ENCODE measurements at regions of chr13 and their contacts with region 1.

Region 1: DNA sequence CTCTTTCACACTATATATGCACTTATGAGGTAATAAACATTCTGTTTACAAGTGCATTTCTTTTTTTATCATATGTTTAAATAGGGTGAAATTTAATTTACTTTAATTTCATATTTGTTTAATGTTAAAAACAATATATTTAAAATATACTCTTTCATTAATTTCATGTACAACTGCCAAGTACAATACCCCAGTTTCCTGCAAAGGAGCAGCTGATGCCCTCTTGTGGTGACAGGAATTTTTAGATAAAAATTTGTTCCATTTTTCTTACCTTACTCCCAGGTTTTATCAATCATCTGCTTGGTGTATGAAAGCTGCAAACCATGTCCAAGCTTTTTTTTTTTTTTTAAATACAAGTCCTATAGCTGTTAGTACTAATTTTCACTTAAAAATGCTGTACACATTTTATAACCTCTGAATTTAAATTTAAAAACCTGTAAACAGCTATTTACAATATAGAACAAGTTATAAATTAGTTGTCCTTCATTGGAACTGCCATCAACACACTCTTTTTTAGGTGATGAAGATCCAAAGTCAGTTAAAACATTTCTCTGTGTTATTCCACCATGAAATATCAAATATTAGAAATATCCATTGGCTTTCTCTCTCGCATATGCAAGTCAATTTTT is 4.9 kb downstream of the PCDH20 start:
- DNase-seq: no peak
- ATAC-seq: 0 out of 3 replicates have a peak, but pooled peaks have one; percentile 33
- H3K4me3 ChIP-seq: no peak overlapping the region
- H3K27ac ChIP-seq: no peak overlapping the region
- H3K4me1 ChIP-seq: no peaks in the 10 kb centered on the region
- H3K27me3 ChIP-seq: peaks cover 0 to 4% of the 10 kb centered on the region in 2 experiments; a peak in 1 of 4 replicates
- CTCF ChIP-seq: peak; percentile 35 to 54 (median 36); a peak in 5 of 6 replicates
- EP300 ChIP-seq: no peak
- POLR2A ChIP-seq: no peak
- RAD21 ChIP-seq: peak; percentile 60

Region 2: GRCh38 chr13:60448907-60449510 is 961.8 kb before region 1 on chr13:
- CTCF ChIA-PET with region 1: interaction called, 8 read pairs
- POLR2A ChIA-PET with region 1: no interaction called
- RAD21 ChIA-PET with region 1: no interaction called
- SMC1A ChIA-PET with region 1: interaction called, 3 read pairs
- in situ Hi-C with region 1: loop called (anchors 25 kb)
- intact Hi-C with region 1: no loop called
- DNase-seq: no peak
- ATAC-seq: peak; percentile 61
- H3K4me3 ChIP-seq: no peak overlapping the region
- H3K27ac ChIP-seq: no peak overlapping the region
- H3K4me1 ChIP-seq: no peaks in the 10 kb centered on the region
- H3K27me3 ChIP-seq: no peaks in the 10 kb centered on the region
- CTCF ChIP-seq: peak; percentile 67 to 73 (median 68)
- EP300 ChIP-seq: no peak
- POLR2A ChIP-seq: no peak
- RAD21 ChIP-seq: peak; percentile 82

Region 3: GRCh38 chr13:60479273-60479672 is 931.5 kb before region 1 on chr13:
- CTCF ChIA-PET with region 1: no interaction called
- POLR2A ChIA-PET with region 1: no interaction called
- RAD21 ChIA-PET with region 1: no interaction called
- SMC1A ChIA-PET with region 1: no interaction called
- in situ Hi-C with region 1: loop called (anchors 25 kb)
- intact Hi-C with region 1: loop called (anchors 10 kb)
- DNase-seq: no peak
- ATAC-seq: no peak
- H3K4me3 ChIP-seq: no peak overlapping the region
- H3K27ac ChIP-seq: no peak overlapping the region
- H3K4me1 ChIP-seq: no peaks in the 10 kb centered on the region
- H3K27me3 ChIP-seq: no peaks in the 10 kb centered on the region
- CTCF ChIP-seq: no peak
- EP300 ChIP-seq: no peak
- POLR2A ChIP-seq: no peak
- RAD21 ChIP-seq: no peak

Region 4: GRCh38 chr13:60627071-60627686 is 783.6 kb before region 1 on chr13:
- CTCF ChIA-PET with region 1: interaction called, 14 read pairs
- POLR2A ChIA-PET with region 1: no interaction called
- RAD21 ChIA-PET with region 1: interaction called, 4 read pairs
- SMC1A ChIA-PET with region 1: interaction called, 21 read pairs
- in situ Hi-C with region 1: loop called (anchors 10 kb)
- intact Hi-C with region 1: loop called (anchors 1 kb)
- DNase-seq: no peak
- ATAC-seq: peak; percentile 95
- H3K4me3 ChIP-seq: no peak overlapping the region
- H3K27ac ChIP-seq: no peak overlapping the region
- H3K4me1 ChIP-seq: no peaks in the 10 kb centered on the region
- H3K27me3 ChIP-seq: no peaks in the 10 kb centered on the region
- CTCF ChIP-seq: peak; percentile 62 to 70 (median 69)
- EP300 ChIP-seq: no peak
- POLR2A ChIP-seq: no peak
- RAD21 ChIP-seq: peak; percentile 76

Region 5: DNA sequence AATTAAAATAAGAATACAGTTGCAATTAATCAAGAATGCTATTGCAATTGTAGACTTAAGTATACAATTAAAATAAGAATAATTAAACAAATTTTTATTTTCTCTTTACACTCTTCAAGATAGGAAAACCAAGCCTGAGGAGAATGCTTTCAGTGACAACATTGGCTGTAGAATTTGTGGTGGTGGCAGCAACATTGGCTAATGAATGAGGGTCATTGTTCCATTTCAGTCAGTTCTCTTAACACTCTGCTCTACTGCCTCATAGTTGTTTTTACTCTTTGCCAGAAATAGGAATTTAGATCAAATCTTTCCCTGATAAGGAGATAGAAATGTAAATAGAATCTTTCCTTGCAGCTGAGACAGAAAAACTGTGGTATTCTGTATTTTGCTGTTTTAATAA is 386.7 kb before region 1 on chr13:
- CTCF ChIA-PET with region 1: no interaction called
- POLR2A ChIA-PET with region 1: no interaction called
- RAD21 ChIA-PET with region 1: no interaction called
- SMC1A ChIA-PET with region 1: no interaction called
- in situ Hi-C with region 1: no loop called
- intact Hi-C with region 1: no loop called
- DNase-seq: no peak
- ATAC-seq: no peak
- H3K4me3 ChIP-seq: no peak overlapping the region
- H3K27ac ChIP-seq: no peak overlapping the region
- H3K4me1 ChIP-seq: no peaks in the 10 kb centered on the region
- H3K27me3 ChIP-seq: no peaks in the 10 kb centered on the region
- CTCF ChIP-seq: no peak
- EP300 ChIP-seq: no peak
- POLR2A ChIP-seq: no peak
- RAD21 ChIP-seq: no peak

Region 6: DNA sequence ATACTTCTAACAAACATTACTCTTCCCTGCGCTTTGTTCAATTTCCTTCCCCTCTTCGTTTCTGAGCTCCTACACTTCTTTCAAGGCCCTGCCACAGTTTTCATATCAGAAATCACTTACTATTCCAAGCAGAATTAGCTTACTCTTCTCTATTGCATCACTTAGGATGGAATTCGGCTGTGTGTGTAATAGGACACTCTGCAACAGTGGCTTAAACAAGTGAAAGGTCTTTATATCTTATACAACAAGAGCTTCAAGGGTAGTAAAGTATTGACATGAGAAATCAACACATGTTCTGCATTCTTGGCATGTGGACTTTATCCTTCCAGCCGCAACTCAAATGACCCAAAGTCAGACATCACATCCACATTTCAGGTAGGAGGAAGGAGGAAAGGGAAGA is 274.7 kb before region 1 on chr13:
- CTCF ChIA-PET with region 1: no interaction called
- POLR2A ChIA-PET with region 1: no interaction called
- RAD21 ChIA-PET with region 1: no interaction called
- SMC1A ChIA-PET with region 1: no interaction called
- in situ Hi-C with region 1: no loop called
- intact Hi-C with region 1: loop called (anchors 10 kb)
- DNase-seq: no peak
- ATAC-seq: no peak
- H3K4me3 ChIP-seq: no peak overlapping the region
- H3K27ac ChIP-seq: no peak overlapping the region
- H3K4me1 ChIP-seq: no peaks in the 10 kb centered on the region
- H3K27me3 ChIP-seq: no peaks in the 10 kb centered on the region
- CTCF ChIP-seq: no peak
- EP300 ChIP-seq: no peak
- POLR2A ChIP-seq: no peak
- RAD21 ChIP-seq: no peak

Region 7: DNA sequence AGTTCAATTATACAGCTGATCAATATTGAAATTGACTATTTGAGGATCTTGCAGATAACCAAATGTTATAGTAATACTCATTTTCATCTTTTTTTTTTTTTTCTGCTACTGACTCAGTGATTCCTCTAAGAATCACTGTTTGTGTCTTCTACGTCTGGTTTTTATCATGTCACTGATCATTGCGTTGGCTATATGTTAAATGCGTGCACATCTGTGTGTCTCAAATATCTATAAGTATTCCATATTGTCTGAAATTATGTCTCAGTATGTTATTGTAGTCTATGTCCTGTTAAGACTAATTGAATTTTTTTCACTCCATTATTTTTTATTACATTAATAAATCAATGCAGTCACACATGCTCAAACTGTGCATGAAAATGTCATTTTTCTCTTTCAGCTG is 195.7 kb before region 1 on chr13:
- CTCF ChIA-PET with region 1: no interaction called
- POLR2A ChIA-PET with region 1: no interaction called
- RAD21 ChIA-PET with region 1: no interaction called
- SMC1A ChIA-PET with region 1: no interaction called
- in situ Hi-C with region 1: no loop called
- intact Hi-C with region 1: no loop called
- DNase-seq: no peak
- ATAC-seq: no peak
- H3K4me3 ChIP-seq: no peak overlapping the region
- H3K27ac ChIP-seq: no peak overlapping the region
- H3K4me1 ChIP-seq: no peaks in the 10 kb centered on the region
- H3K27me3 ChIP-seq: no peaks in the 10 kb centered on the region
- CTCF ChIP-seq: no peak
- EP300 ChIP-seq: no peak
- POLR2A ChIP-seq: no peak
- RAD21 ChIP-seq: no peak

Region 8: GRCh38 chr13:61286148-61286745 is 124.5 kb before region 1 on chr13:
- CTCF ChIA-PET with region 1: interaction called, 3 read pairs
- POLR2A ChIA-PET with region 1: no interaction called
- RAD21 ChIA-PET with region 1: interaction called, 5 read pairs
- SMC1A ChIA-PET with region 1: no interaction called
- in situ Hi-C with region 1: no loop called
- intact Hi-C with region 1: loop called (anchors 1 kb)
- DNase-seq: no peak
- ATAC-seq: peak; percentile 94
- H3K4me3 ChIP-seq: no peak overlapping the region
- H3K27ac ChIP-seq: no peak overlapping the region
- H3K4me1 ChIP-seq: no peaks in the 10 kb centered on the region
- H3K27me3 ChIP-seq: no peaks in the 10 kb centered on the region
- CTCF ChIP-seq: peak; percentile 16 to 34 (median 28); a peak in 1 of 6 replicates
- EP300 ChIP-seq: no peak
- POLR2A ChIP-seq: no peak
- RAD21 ChIP-seq: peak; percentile 48

Region 9: DNA sequence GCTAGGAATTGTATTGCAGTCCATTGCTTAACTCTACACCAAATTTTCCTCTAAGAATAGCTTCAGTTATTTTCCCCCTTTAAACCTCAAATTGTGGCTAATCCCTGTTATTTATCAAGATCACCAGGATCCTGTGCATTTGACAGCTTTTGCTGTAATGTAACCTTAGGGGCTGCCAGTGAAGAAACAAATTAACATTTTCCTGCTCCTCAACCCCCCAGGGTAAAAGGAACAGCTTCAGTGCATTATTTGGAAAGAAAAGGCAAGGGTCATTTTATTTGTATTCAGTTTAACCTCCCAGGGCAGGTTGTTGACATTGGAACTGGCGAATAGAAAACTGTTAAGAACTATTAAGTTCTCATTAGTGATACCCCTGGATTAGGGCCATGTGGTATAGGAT is 52.2 kb before region 1 on chr13:
- CTCF ChIA-PET with region 1: no interaction called
- POLR2A ChIA-PET with region 1: no interaction called
- RAD21 ChIA-PET with region 1: no interaction called
- SMC1A ChIA-PET with region 1: no interaction called
- in situ Hi-C with region 1: no loop called
- intact Hi-C with region 1: no loop called
- DNase-seq: no peak
- ATAC-seq: no peak
- H3K4me3 ChIP-seq: no peak overlapping the region
- H3K27ac ChIP-seq: no peak overlapping the region
- H3K4me1 ChIP-seq: no peaks in the 10 kb centered on the region
- H3K27me3 ChIP-seq: no peaks in the 10 kb centered on the region
- CTCF ChIP-seq: no peak
- EP300 ChIP-seq: no peak
- POLR2A ChIP-seq: no peak
- RAD21 ChIP-seq: no peak

Region 10: DNA sequence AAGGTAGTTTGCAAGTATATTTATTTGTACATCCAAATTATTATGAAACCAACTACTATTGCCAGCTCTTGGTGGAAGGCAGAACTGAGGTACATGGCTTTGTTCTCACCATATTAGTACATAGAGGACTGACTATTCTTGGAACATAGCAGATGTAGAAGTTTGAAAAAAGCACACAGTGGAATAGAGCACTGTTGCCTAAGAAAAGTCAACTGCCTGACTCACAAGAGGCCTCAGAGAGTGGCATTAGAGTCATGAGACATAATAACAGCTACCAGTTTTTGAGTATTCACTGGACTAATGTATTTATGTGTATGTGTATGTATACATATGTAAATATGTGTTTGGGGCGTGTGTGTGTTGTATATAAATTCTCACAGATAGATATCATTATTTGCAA is 13.1 kb after region 1 on chr13:
- CTCF ChIA-PET with region 1: interaction called, 11 read pairs
- POLR2A ChIA-PET with region 1: no interaction called
- RAD21 ChIA-PET with region 1: no interaction called
- SMC1A ChIA-PET with region 1: interaction called, 13 read pairs
- in situ Hi-C with region 1: no loop called
- intact Hi-C with region 1: no loop called
- DNase-seq: no peak
- ATAC-seq: no peak
- H3K4me3 ChIP-seq: no peak overlapping the region
- H3K27ac ChIP-seq: no peak overlapping the region
- H3K4me1 ChIP-seq: no peaks in the 10 kb centered on the region
- H3K27me3 ChIP-seq: no peaks in the 10 kb centered on the region
- CTCF ChIP-seq: no peak
- EP300 ChIP-seq: no peak
- POLR2A ChIP-seq: no peak
- RAD21 ChIP-seq: no peak